Activated B cell treated with CpG ODN at 0.5 μM for 24 hours (primary cell): ENCODE measurements at regions of chr13 and their contacts with region 1.

Region 1: DNA sequence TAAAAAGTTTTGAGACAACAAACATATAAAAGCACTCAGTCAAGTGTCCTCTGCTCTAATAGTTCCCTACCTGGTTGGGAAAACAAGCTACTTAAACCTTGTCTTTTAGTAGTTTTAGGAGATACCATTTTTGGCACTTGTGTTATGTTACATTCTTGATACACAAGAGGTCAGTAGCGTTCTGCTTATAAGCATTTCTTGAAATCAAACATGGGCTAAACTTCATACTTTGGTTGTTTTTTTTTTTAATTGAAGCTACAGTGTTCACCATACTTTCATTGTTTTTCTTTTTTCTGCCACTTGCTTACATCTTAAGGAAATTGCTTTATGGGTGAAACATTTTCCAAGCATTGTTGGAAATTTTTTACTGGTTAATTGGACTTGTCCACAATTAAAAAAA is 12.9 kb downstream of the NHLRC3 start:
- DNase-seq: no peak
- ATAC-seq: no peak
- H3K4me3 Mint-ChIP-seq: no peak overlapping the region
- H3K27ac Mint-ChIP-seq: no peak overlapping the region
- H3K4me1 Mint-ChIP-seq: peaks cover 2% of the 10 kb centered on the region
- H3K27me3 Mint-ChIP-seq: no peaks in the 10 kb centered on the region
- CTCF ChIP-seq: no peak

Region 2: DNA sequence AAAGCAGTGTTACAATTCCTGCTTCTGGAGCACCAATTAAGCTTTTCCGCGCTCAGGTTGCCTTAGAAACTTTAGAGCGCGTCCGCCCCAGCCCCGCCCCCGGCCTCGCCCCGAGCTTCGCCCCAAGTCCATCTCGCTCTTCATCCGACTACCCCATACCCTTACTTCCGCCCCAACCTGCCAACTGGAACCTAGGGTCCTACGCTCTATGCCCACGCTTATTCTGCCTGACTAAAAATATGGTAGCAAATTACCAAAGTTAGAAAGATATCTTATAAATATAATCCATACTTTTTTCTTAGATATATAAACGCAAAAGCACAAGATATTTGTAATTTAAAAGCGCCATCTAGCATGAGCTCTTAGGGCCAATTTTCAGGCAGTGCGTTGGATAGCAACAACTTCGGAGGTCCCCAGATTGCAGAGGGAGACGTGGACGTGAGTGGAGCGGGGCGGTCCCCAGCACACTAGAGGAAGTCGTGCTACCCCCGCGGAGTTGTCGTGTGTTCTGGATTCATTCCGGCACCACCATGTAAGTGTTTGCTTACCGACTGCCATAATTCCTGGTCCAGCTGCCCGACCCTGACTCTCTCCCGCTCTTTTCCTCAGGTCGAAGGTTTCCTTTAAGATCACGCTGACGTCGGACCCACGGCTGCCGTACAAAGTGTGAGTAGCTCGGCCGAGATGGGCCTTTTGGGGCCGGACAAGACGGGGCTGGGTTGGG is 701.6 kb before region 1 on chr13 and contains the start of gene UFM1:
- CTCF ChIA-PET with region 1: no interaction called
- POLR2A ChIA-PET with region 1: no interaction called
- intact Hi-C with region 1: no loop called
- DNase-seq: peak; percentile 76
- ATAC-seq: peak; percentile 95
- H3K4me3 Mint-ChIP-seq: peak within 1 kb of the TSS; percentile 98
- H3K27ac Mint-ChIP-seq: peak within 1 kb of the TSS; percentile 97
- H3K4me1 Mint-ChIP-seq: peaks cover 33% of the 10 kb centered on the region
- H3K27me3 Mint-ChIP-seq: no peaks in the 10 kb centered on the region
- CTCF ChIP-seq: no peak
- total RNA-seq, gene UFM1: 49.4 and 55.7 TPM in 2 replicates

Region 3: DNA sequence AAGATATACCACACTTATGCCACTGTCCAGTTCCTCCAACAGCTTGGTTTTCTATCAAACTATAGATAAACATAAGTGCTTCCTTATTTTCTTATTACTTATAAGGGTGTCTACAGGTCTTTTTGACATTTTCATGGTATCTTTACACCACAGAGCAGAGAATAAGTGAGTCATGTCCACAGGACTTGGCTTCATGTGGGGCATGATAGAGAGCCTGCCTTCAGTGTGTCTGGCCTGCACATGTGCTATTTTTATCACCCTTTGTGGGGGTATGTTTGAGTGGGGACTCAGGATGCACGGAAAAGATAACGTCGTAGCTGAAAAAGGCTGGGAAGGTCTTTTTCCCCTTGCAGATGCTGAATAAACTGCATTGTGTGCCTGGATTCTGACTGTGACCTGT is 52.4 kb before region 1 on chr13:
- CTCF ChIA-PET with region 1: no interaction called
- POLR2A ChIA-PET with region 1: no interaction called
- intact Hi-C with region 1: no loop called
- DNase-seq: no peak
- ATAC-seq: no peak
- H3K4me3 Mint-ChIP-seq: no peak overlapping the region
- H3K27ac Mint-ChIP-seq: no peak overlapping the region
- H3K4me1 Mint-ChIP-seq: no peaks in the 10 kb centered on the region
- H3K27me3 Mint-ChIP-seq: no peaks in the 10 kb centered on the region
- CTCF ChIP-seq: no peak

Region 4: GRCh38 chr13:39263033-39263432 is 211.9 kb after region 1 on chr13:
- CTCF ChIA-PET with region 1: no interaction called
- POLR2A ChIA-PET with region 1: no interaction called
- intact Hi-C with region 1: loop called (anchors 1 kb)
- DNase-seq: no peak
- ATAC-seq: no peak
- H3K4me3 Mint-ChIP-seq: no peak overlapping the region
- H3K27ac Mint-ChIP-seq: no peak overlapping the region
- H3K4me1 Mint-ChIP-seq: no peaks in the 10 kb centered on the region
- H3K27me3 Mint-ChIP-seq: peaks cover 3% of the 10 kb centered on the region
- CTCF ChIP-seq: no peak

Region 5: GRCh38 chr13:39676315-39676876 is 625.2 kb after region 1 on chr13:
- CTCF ChIA-PET with region 1: no interaction called
- POLR2A ChIA-PET with region 1: no interaction called
- intact Hi-C with region 1: loop called (anchors 2 kb)
- DNase-seq: no peak
- ATAC-seq: no peak
- H3K4me3 Mint-ChIP-seq: no peak overlapping the region
- H3K27ac Mint-ChIP-seq: no peak overlapping the region
- H3K4me1 Mint-ChIP-seq: no peaks in the 10 kb centered on the region
- H3K27me3 Mint-ChIP-seq: no peaks in the 10 kb centered on the region
- CTCF ChIP-seq: no peak